Common myeloid progenitor, CD34-positive (primary cell): ENCODE measurements at regions of chr10 and their contacts with region 1.

Region 1: GRCh38 chr10:108204479-108205305 is 1040.2 kb upstream of the SORCS1 start:
- DNase-seq: peak; percentile 30 to 53 (median 31)
- H3K4me3 ChIP-seq: no peak overlapping the region
- H3K27ac ChIP-seq: no peak overlapping the region
- H3K4me1 ChIP-seq: no peaks in the 10 kb centered on the region
- H3K27me3 ChIP-seq: no peaks in the 10 kb centered on the region

Region 2: GRCh38 chr10:108544494-108545120 is 339.9 kb after region 1 on chr10:
- CTCF ChIA-PET with region 1: interaction called, 14 read pairs
- POLR2A ChIA-PET with region 1: no interaction called
- DNase-seq: peak; percentile 56 to 66 (median 59)
- H3K4me3 ChIP-seq: no peak overlapping the region
- H3K27ac ChIP-seq: no peak overlapping the region
- H3K4me1 ChIP-seq: peaks cover 0 to 2% (median 0%) of the 10 kb centered on the region in 4 experiments
- H3K27me3 ChIP-seq: no peaks in the 10 kb centered on the region